Activated CD4-positive, alpha-beta memory T cell treated with anti-CD3 and anti-CD28 coated beads, Interleukin-2, amount 10 ng/mL, durations not matched to agents 7 days and 5 days (primary cell): ENCODE measurements at regions of chr3 and their contacts with region 1.

Region 1: DNA sequence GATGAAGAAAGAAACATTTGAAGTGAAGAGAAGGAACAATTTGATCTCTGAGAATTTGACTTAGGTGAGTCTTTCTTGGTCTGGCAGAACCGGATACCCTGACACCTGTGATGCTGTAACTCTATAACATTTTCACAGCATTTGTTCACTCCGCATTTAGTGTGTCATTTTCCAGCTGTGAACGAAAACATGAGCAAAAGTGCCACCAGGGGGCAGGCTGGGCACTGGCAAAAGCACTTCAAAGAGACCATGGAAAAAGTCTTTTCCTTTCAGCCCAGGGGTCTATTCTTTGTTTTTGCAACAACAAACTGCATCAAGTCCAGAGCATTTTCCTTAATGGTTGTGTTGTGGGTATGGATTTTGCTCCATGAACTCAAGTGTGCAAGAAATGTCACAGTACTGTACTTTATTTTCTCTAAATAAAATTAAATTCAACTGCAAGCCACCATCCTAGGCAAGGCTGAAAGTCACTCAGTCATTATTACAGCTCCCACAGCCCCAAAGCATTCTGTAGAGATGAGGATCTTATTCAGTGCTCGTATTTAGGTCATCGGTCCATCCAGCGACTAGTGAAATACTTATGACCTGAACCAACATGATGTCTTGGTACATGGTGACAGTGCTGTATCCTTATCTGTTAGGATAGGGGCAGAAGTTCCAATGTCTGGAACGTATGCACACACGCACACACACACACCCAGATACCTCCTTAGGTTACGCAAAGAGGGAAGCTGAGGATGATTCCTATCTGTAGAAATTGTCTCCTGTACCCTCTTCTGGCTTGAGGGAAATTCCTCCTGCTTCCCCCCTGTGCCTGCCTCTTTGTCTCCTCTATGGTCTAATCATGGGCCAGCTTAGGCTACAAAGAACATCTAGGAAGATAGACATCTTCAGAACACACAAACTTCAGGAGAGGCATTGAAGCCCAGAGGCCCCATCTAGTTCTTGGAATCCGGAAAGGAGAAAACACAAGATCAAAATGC is 125.5 kb downstream of the GADL1 start:
- DNase-seq: peak; percentile 74
- H3K4me3 Mint-ChIP-seq: no peak overlapping the region
- H3K27ac Mint-ChIP-seq: no peak overlapping the region
- H3K4me1 Mint-ChIP-seq: peaks cover 2% of the 10 kb centered on the region
- H3K27me3 Mint-ChIP-seq: peaks cover 15% of the 10 kb centered on the region

Region 2: GRCh38 chr3:30779686-30780287 is 10.8 kb after region 1 on chr3:
- CTCF ChIA-PET with region 1: interaction called, 10 read pairs
- POLR2A ChIA-PET with region 1: no interaction called
- DNase-seq: no peak
- H3K4me3 Mint-ChIP-seq: no peak overlapping the region
- H3K27ac Mint-ChIP-seq: no peak overlapping the region
- H3K4me1 Mint-ChIP-seq: no peaks in the 10 kb centered on the region
- H3K27me3 Mint-ChIP-seq: peaks cover 9% of the 10 kb centered on the region